Astrocyte of the cerebellum (primary cell): ENCODE measurements at regions of chr18 and their contacts with region 1.

Region 1: GRCh38 chr18:42310956-42311355 is 355.9 kb downstream of the PIK3C3 start:
- DNase-seq: no peak
- H3K4me3 ChIP-seq: no peak overlapping the region
- CTCF ChIP-seq: no peak

Region 2: GRCh38 chr18:42351455-42351854 is 40.5 kb after region 1 on chr18:
- in situ Hi-C with region 1: no loop called
- DNase-seq: no peak
- H3K4me3 ChIP-seq: no peak overlapping the region
- CTCF ChIP-seq: no peak

Region 3: DNA sequence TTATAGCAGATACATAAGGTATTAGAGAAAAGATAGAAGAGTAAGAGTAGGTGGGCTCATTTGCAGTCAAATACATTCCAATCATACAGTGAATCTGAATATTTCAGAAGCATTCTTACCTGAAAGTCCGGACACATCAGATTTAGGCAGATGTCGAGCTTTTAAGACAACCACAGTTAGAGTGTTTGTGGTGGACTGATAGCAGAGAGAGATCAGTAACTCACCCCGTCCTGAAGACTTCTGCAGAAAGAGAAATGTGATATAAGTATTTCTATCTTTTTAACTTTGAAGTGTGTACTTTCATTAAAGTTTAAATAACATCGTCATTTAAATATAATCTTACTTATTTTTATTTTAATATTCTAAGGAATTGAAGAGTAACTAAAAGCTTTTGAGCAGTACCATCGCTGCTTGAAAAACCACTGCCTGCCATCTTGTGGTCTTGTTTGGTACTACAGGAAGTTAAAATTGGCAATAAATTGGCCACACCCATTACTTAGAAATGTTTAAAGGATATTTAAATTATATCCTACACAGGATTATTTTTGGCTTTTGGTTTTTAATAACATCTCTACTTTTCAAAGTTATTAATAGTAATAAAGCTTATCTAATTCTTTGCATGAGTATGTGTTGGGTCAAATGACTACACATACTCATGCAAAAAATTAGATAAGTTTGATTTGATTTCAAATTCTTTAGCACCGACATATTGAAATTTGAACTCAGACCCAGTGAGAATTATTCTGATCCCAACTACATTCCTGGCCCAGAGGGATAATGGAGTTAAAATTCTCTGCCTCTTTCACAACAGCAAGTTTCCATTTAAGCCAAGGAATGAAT is 960.9 kb after region 1 on chr18:
- in situ Hi-C with region 1: loop called (anchors 25 kb)
- DNase-seq: peak; percentile 60
- H3K4me3 ChIP-seq: no peak overlapping the region
- CTCF ChIP-seq: peak; percentile 75